ENCODE measurements at regions of chr14 and their contacts with region 1.

Region 1: DNA sequence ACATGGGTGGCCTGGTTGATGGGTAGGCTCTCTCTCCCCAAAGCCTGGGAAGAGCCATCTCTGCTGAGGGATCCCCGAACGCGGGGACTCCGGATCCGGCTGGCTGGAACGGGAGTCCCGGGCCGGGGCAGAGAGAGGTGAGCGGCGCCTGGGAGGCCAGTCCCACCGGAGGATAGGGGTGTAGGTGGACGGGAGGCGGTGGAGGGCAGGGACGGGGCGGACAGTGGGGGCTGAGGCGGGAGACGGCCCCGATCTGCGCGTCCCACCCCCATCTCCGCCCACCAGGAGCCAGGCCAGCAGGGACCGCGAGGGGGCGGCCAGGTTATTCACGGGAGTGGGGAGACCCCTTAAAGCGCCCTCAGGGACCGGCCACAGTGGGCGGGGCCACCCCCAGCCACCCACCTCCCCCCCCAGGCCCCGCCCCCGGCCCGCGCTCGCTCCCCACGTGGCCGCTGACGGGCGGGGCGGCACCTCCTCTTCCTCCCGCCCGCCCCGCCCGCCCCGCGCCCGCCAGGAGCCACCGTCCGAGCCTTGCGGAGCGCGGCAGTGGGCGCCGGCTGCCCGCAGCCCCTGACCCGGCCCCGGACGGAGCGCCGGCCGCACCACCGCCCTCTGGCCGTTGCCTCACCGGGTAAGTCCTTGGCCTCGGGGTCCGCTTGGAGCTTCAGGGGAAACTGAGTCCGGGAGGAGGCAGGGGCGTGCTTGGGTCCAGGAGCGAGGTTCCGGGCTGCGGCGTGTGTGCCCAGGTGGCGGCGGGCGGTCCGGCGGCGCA is at the start of gene INF2:
- DNase-seq: peak; percentile 53
- ATAC-seq: peak; percentile 70
- H3K4me3 Mint-ChIP-seq: peak within 1 kb of the TSS; percentile 73
- H3K27ac Mint-ChIP-seq: no peak within 1 kb of the TSS
- H3K4me1 Mint-ChIP-seq: peaks cover 36% of the 10 kb centered on the region
- H3K27me3 Mint-ChIP-seq: no peaks in the 10 kb centered on the region
- total RNA-seq, gene INF2: 59.9 to 63.6 TPM

Region 2: GRCh38 chr14:104677512-104678332 is 11.6 kb before region 1 on chr14:
- CTCF ChIA-PET with region 1: interaction called, 17 read pairs
- DNase-seq: peak; percentile 75
- ATAC-seq: peak; percentile 83
- H3K4me3 Mint-ChIP-seq: peak overlapping the region; percentile 65
- H3K27ac Mint-ChIP-seq: peak overlapping the region; percentile 78
- H3K4me1 Mint-ChIP-seq: peaks cover 20% of the 10 kb centered on the region
- H3K27me3 Mint-ChIP-seq: peaks cover 10% of the 10 kb centered on the region

Region 3: DNA sequence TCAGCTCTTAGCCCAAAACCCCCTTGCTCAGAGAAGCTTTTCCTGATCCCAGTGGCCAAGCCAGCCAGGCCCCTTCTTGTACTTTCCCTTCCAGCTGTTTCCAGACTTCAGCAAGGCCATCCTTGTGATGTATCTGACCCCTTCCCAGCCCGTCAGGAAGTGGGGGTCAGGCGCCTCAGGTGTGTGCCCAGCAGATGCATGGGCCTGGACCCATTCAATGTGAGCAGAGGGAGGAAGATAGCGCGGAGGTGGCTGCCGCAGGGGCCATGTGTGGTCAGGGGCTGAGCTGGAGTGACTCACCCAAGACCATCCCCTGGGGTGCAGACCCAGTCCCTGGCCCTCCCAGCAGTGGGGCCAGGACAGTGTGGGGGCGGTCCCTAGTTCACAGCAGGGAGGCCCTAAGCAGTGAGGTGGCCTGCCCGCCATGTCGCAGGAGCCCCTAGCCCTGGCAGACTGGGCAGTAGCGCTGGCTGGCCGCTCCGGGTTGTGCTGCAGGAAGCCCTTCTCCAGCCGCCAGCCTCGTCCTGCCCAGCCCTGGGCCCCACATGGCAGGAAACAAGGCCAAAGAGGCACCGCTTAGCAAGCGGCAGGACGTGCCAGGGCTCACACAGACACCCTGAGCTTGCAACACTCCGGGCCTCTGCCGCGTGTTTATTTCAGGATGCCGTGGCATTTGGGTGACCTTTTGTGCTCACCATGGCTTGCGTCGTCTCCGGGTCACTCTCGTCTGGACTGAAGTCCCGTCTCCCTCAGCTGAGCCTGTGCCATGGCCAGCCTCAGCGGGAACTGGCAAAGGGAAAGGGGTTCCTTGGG is 46.7 kb after region 1 on chr14:
- CTCF ChIA-PET with region 1: no interaction called
- DNase-seq: no peak
- ATAC-seq: no peak
- H3K4me3 Mint-ChIP-seq: no peak overlapping the region
- H3K27ac Mint-ChIP-seq: no peak overlapping the region
- H3K4me1 Mint-ChIP-seq: no peaks in the 10 kb centered on the region
- H3K27me3 Mint-ChIP-seq: no peaks in the 10 kb centered on the region

Measured in activated CD8-positive, alpha-beta memory T cell treated with anti-CD3 and anti-CD28 coated beads, Interleukin-2, amount 10 ng/mL, durations not matched to agents 7 days and 5 days (primary cell).